Dorsolateral prefrontal cortex (tissue), 120 donors: ENCODE measurements at regions of chr19 and their contacts with region 1.

Region 1: DNA sequence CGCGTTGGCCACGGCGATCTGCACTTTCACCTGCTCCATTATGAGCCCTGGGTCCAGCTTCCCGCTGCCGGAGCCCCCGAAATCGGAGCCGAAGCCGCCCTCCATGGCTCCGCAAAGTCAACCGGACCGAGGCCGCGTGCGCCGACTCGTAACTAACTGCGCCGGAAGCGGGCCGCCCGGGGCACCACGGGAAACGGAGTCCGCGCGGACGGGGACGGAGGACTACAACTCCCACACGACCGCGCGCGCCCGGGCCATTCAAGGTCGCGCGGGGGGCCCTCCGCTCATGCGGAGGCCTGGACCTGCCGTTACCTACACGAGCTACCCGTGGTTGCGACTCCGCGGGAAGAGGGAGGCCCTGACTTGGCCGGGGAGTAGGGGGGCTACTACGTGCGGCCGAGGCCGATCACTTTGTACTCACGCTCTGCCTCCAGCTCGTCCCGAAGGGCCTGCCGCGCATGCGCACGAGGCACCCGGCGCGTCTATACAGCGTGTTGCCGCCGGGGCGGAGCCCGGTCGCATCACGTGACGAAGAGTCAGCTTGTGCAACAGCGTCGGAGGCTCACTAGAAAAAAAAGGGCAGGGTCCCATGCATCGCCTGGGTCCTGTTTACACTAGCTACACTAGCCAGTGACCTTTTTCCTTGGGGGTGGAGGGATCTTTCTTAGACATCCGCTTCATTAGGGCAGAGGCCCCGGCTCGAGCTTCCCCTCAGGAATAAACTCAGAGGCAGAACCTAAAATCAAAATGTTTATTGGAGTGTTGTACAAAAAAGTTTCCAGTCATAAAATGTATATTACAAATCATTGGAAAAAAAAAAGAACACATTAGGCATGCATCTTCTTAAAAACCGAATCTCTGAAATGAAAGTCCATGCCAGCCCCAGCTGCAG is at the start of gene TIMM13:
- DNase-seq: peak; percentile 94 to 99 (median 96)
- H3K4me3 ChIP-seq: peak within 1 kb of the TSS; percentile 62 to 100 (median 96)
- H3K27ac ChIP-seq: peak within 1 kb of the TSS; percentile 79 to 100 (median 98)
- H3K27me3 ChIP-seq: no peaks in the 10 kb centered on the region
- CTCF ChIP-seq: peak in 10 of 56 donors; percentile 2 to 39 (median 16)
- total RNA-seq, gene TIMM13: 36.0 to 71.8 (median 52.0) TPM

Region 2: GRCh38 chr19:2455851-2456570 is 28.3 kb after region 1 on chr19:
- intact Hi-C with region 1: loop called (anchors 2 kb)
- DNase-seq: peak in 2 of 10 donors; percentile 21 to 52
- H3K4me3 ChIP-seq: peak overlapping the region; percentile 57 to 97 (median 84)
- H3K27ac ChIP-seq: peak overlapping the region in 25 of 59 donors; percentile 17 to 85 (median 48)
- H3K27me3 ChIP-seq: no peaks in the 10 kb centered on the region
- CTCF ChIP-seq: no peak

Region 3: GRCh38 chr19:2610637-2611482 is 183.2 kb after region 1 on chr19:
- intact Hi-C with region 1: loop called in 1 of 2 experiments (anchors 5 kb)
- DNase-seq: peak; percentile 85 to 93 (median 92)
- H3K4me3 ChIP-seq: peak overlapping the region in 58 of 59 donors; percentile 28 to 71 (median 53)
- H3K27ac ChIP-seq: peak overlapping the region in 40 of 59 donors; percentile 2 to 84 (median 56)
- H3K27me3 ChIP-seq: no peaks in the 10 kb centered on the region
- CTCF ChIP-seq: peak; percentile 94 to 100 (median 98)